ENCODE measurements at regions of chr17 and their contacts with region 1.

Region 1: GRCh38 chr17:39808409-39808997 is 55.6 kb downstream of the IKZF3 start:
- DNase-seq: peak; percentile 98
- H3K4me3 Mint-ChIP-seq: peak overlapping the region; percentile 1
- H3K27ac Mint-ChIP-seq: peak overlapping the region; percentile 16
- H3K4me1 Mint-ChIP-seq: peaks cover 37% of the 10 kb centered on the region
- H3K27me3 Mint-ChIP-seq: no peaks in the 10 kb centered on the region
- CTCF ChIP-seq: no peak

Region 2: GRCh38 chr17:39553341-39553945 is 255.1 kb before region 1 on chr17:
- CTCF ChIA-PET with region 1: no interaction called
- intact Hi-C with region 1: no loop called
- DNase-seq: no peak
- H3K4me3 Mint-ChIP-seq: no peak overlapping the region
- H3K27ac Mint-ChIP-seq: no peak overlapping the region
- H3K4me1 Mint-ChIP-seq: no peaks in the 10 kb centered on the region
- H3K27me3 Mint-ChIP-seq: no peaks in the 10 kb centered on the region
- CTCF ChIP-seq: no peak

Region 3: GRCh38 chr17:39636927-39637736 is 171.4 kb before region 1 on chr17 and contains the start of gene STARD3:
- CTCF ChIA-PET with region 1: interaction called, 73 read pairs
- intact Hi-C with region 1: no loop called
- DNase-seq: no peak
- H3K4me3 Mint-ChIP-seq: peak within 1 kb of the TSS; percentile 71
- H3K27ac Mint-ChIP-seq: peak within 1 kb of the TSS; percentile 28
- H3K4me1 Mint-ChIP-seq: peaks cover 61% of the 10 kb centered on the region
- H3K27me3 Mint-ChIP-seq: peaks cover 5% of the 10 kb centered on the region
- CTCF ChIP-seq: no peak
- total RNA-seq, gene STARD3: 2,579 and 2,697 TPM in 2 replicates

Region 4: GRCh38 chr17:39659279-39660010 is 149.1 kb before region 1 on chr17:
- CTCF ChIA-PET with region 1: interaction called, 123 read pairs
- intact Hi-C with region 1: no loop called
- DNase-seq: peak; percentile 83
- H3K4me3 Mint-ChIP-seq: no peak overlapping the region
- H3K27ac Mint-ChIP-seq: no peak overlapping the region
- H3K4me1 Mint-ChIP-seq: peaks cover 26% of the 10 kb centered on the region
- H3K27me3 Mint-ChIP-seq: no peaks in the 10 kb centered on the region
- CTCF ChIP-seq: no peak

Region 5: GRCh38 chr17:39699818-39700147 is 108.7 kb before region 1 on chr17 and contains the start of gene ERBB2:
- CTCF ChIA-PET with region 1: interaction called, 99 read pairs
- intact Hi-C with region 1: no loop called
- DNase-seq: peak; percentile 100
- H3K4me3 Mint-ChIP-seq: peak within 1 kb of the TSS; percentile 71
- H3K27ac Mint-ChIP-seq: peak within 1 kb of the TSS; percentile 67
- H3K4me1 Mint-ChIP-seq: peaks cover 68% of the 10 kb centered on the region
- H3K27me3 Mint-ChIP-seq: no peaks in the 10 kb centered on the region
- CTCF ChIP-seq: no peak
- total RNA-seq, gene ERBB2: 4,829 and 4,830 TPM in 2 replicates

Region 6: DNA sequence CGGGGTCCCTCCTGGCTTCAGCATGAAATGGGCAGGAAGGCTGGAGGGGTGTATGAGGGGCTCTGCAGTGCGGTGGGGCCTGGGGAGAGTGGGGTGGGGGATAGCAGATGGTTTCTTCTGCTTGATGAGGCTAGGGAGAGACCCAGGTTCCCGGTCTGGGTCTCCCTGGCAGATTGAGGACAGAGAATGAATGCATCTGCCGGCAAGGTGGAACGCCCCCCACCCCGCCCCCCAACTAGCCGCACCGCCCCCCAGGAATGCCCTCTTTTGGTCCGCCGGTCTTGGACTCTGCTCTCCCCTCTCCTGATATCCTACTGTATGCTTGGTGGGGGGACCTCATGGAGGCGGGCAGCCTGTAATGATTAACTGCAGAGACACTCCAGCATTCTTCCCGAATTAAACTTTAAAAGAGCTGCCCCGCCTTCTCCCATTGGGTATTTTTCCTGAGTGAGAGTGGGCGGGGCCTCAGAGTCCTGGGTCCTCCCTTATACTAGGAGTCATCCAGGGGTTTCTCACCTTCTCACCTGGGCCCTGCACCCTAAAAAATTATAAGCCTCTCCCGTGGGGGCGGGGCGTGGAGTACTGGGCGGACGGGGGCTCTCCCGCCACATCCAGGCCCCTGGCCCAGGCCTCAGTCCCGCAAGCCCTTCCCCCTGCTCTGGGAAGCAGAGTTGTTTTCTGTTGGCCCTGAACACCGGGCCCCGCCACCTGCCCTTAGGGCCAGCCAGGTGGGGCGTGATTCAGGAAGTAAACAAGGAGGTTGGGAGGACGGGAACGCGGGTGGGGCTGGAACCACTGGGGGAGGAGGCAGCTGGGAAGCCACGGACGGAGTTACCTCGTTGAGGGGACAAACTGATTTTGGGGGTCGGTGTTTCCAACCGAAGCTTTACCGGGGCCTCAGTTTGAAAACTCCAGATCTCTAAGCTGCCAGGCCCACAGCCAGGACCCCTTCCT is 69.3 kb before region 1 on chr17:
- CTCF ChIA-PET with region 1: interaction called, 85 read pairs
- intact Hi-C with region 1: loop called (anchors 1 kb)
- DNase-seq: peak; percentile 100
- H3K4me3 Mint-ChIP-seq: peak overlapping the region; percentile 77
- H3K27ac Mint-ChIP-seq: peak overlapping the region; percentile 21
- H3K4me1 Mint-ChIP-seq: peaks cover 54% of the 10 kb centered on the region
- H3K27me3 Mint-ChIP-seq: no peaks in the 10 kb centered on the region
- CTCF ChIP-seq: no peak

Region 7: GRCh38 chr17:39889200-39889599 is 80.7 kb after region 1 on chr17:
- CTCF ChIA-PET with region 1: interaction called, 596 read pairs
- intact Hi-C with region 1: loop called (anchors 1 kb)
- DNase-seq: peak; percentile 82
- H3K4me3 Mint-ChIP-seq: no peak overlapping the region
- H3K27ac Mint-ChIP-seq: no peak overlapping the region
- H3K4me1 Mint-ChIP-seq: peaks cover 26% of the 10 kb centered on the region
- H3K27me3 Mint-ChIP-seq: peaks cover 22% of the 10 kb centered on the region
- CTCF ChIP-seq: no peak

Region 8: GRCh38 chr17:39939588-39940419 is 131.3 kb after region 1 on chr17:
- CTCF ChIA-PET with region 1: interaction called, 501 read pairs
- intact Hi-C with region 1: no loop called
- DNase-seq: peak; percentile 76
- H3K4me3 Mint-ChIP-seq: no peak overlapping the region
- H3K27ac Mint-ChIP-seq: no peak overlapping the region
- H3K4me1 Mint-ChIP-seq: peaks cover 12% of the 10 kb centered on the region
- H3K27me3 Mint-ChIP-seq: peaks cover 63% of the 10 kb centered on the region
- CTCF ChIP-seq: no peak

Measured in Calu3 (cell line).